Cardiac septum (tissue), 1 donor: ENCODE measurements at regions of chr1 and their contacts with region 1.

Region 1: GRCh38 chr1:27525296-27526272 is 35.6 kb upstream of the WASF2 start:
- DNase-seq: peak; percentile 92

Region 2: GRCh38 chr1:27542408-27543273 is 17.1 kb after region 1 on chr1:
- intact Hi-C with region 1: loop called (anchors 2 kb)
- DNase-seq: no peak

Region 3: DNA sequence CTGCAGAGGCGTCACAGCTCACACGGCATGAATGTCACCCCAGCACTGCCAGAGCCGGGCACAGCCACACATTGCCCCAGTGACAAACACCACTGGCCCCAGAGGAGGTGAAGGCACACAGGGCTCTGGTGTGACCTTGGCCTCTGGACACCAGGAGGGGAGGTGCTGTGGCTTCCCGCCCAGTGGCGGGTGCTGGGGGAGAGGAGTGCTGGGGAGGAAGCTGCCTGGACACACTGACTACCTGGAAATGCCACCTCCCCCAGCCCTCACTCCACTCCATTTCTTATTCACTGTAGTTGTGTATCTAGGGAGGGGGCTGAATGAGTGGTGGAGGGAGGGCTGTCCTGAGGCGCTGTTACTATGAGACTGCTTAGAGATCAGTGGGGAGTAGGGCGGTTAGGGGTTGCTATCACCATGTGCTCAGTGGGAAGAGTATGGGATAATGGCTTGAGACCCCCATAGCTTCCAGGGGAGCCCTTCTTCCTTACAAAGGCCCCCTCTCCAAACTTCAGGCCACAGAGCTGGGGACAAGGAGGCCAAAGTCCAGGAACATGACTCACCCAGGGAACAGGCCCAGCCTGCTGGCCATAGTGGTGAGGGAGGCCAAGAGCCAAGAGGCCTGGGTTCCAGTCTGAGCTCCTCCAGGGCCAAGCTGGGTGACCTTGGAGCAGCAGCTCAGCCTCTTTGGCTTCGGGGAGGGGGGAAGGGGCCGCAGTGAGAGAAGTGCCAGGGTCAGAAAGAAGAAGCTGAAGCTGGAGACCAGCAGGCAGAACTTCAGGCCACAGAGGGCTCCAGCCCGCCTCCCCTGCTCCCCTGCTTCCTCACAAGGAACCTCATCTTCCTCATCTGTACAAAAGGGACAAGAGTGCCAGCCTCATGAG is 38.2 kb after region 1 on chr1:
- intact Hi-C with region 1: loop called (anchors 5 kb)
- DNase-seq: peak; percentile 88